ENCODE measurements at regions of chr1 and their contacts with region 1.

Region 1: GRCh38 chr1:119647734-119648619 is at the start of gene ZNF697:
- DNase-seq: peak; percentile 98
- H3K4me3 ChIP-seq: peak within 1 kb of the TSS; percentile 78
- H3K27ac ChIP-seq: peak within 1 kb of the TSS; percentile 89
- H3K4me1 ChIP-seq: peaks cover 52% of the 10 kb centered on the region
- H3K27me3 ChIP-seq: no peaks in the 10 kb centered on the region
- CTCF ChIP-seq: peak; percentile 48
- total RNA-seq, gene ZNF697: 9.4 TPM

Region 2: GRCh38 chr1:119582801-119583200 is 65.2 kb before region 1 on chr1:
- intact Hi-C with region 1: loop called (anchors 2 kb)
- DNase-seq: peak; percentile 29
- H3K4me3 ChIP-seq: no peak overlapping the region
- H3K27ac ChIP-seq: no peak overlapping the region
- H3K4me1 ChIP-seq: peaks cover 4% of the 10 kb centered on the region
- H3K27me3 ChIP-seq: no peaks in the 10 kb centered on the region
- CTCF ChIP-seq: peak; percentile 62